ENCODE measurements at regions of chrX and their contacts with region 1.

Region 1: DNA sequence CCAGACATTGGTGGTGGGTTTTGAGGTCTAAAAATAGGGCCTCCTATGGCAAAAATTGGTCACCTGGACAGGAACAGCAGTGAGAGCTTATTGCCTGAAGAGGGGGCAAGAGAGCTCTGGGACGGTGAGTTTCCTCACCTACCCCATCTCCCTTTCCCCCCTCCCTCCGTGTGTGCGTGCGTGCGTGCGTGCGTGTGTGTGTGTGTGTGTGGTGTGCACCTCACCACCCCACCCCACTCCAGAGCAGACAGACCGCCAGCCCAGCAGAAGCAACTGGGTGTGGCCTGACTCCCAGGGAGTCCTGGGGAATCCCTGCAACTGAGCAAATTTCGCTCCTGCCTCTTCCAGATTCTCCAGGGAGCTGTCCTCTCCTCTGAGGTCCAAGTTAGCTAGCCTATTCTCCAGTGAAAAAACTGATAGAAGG is 44.7 kb downstream of the PRPS1 start:
- DNase-seq: peak; percentile 66
- H3K4me3 ChIP-seq: no peak overlapping the region
- H3K27ac ChIP-seq: peak overlapping the region; percentile 98
- H3K4me1 ChIP-seq: peaks cover 25% of the 10 kb centered on the region
- H3K27me3 ChIP-seq: peaks cover 3% of the 10 kb centered on the region
- CTCF ChIP-seq: peak; percentile 65 to 76

Region 2: DNA sequence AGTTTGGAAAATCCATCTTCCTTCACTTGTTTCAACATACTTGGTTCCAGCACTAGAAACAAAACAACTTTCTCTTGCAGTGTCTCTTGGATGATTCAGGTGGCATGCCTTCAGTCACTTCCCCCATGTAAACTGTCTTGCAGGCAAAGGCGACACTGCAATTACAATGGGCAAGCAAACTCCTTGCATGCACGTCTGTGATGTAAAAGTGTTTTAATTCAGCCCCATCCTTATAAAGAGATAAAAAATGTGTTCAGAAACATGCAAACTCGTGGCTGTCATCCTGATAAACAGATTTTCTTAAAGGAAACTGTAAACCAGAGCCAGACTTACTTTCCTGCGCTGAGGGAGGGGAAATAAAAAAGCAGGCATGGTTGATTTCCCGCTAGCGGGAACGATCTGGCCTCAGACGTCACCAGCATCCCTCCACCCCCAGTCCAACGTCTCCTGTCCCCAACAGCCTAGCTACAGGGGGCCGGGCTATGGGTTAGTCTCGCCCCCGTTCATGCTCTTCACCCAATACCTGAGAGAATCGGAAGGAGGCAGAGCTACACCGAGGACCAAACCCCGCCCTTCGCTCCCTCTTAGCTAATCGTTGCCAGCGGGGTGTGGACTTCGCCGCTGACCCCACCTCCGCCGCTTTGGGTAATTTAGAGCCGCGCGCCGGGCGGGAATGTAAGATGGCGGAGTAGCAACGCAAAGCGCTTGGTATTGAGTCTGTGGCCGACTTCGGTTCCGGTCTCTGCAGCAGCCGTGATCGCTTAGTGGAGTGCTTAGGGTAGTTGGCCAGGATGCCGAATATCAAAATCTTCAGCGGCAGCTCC is 44.9 kb before region 1 on chrX and contains the start of gene PRPS1:
- CTCF ChIA-PET with region 1: no interaction called
- dilution Hi-C with region 1: no loop called
- in situ Hi-C with region 1: no loop called
- intact Hi-C with region 1: no loop called
- DNase-seq: peak; percentile 90
- H3K4me3 ChIP-seq: peak within 1 kb of the TSS; percentile 48 to 66 (median 66)
- H3K27ac ChIP-seq: peak within 1 kb of the TSS; percentile 56
- H3K4me1 ChIP-seq: no peaks in the 10 kb centered on the region
- H3K27me3 ChIP-seq: peaks cover 2% of the 10 kb centered on the region
- CTCF ChIP-seq: no peak
- total RNA-seq, gene PRPS1: 23.2 to 34.1 TPM

Region 3: GRCh38 chrX:107710617-107711391 is 37.8 kb after region 1 on chrX:
- CTCF ChIA-PET with region 1: interaction called, 12 read pairs
- dilution Hi-C with region 1: loop called (anchors 5 kb)
- in situ Hi-C with region 1: loop called in 1 of 2 experiments (anchors 5 kb)
- intact Hi-C with region 1: loop called (anchors 1 kb)
- DNase-seq: peak; percentile 88
- H3K4me3 ChIP-seq: no peak overlapping the region
- H3K27ac ChIP-seq: peak overlapping the region; percentile 86
- H3K4me1 ChIP-seq: peaks cover 10% of the 10 kb centered on the region
- H3K27me3 ChIP-seq: no peaks in the 10 kb centered on the region
- CTCF ChIP-seq: no peak

Region 4: GRCh38 chrX:107716816-107717700 is 44.1 kb after region 1 on chrX:
- CTCF ChIA-PET with region 1: interaction called, 12 read pairs
- dilution Hi-C with region 1: loop called (anchors 5 kb)
- in situ Hi-C with region 1: loop called in 1 of 2 experiments (anchors 5 kb)
- intact Hi-C with region 1: loop called (anchors 1 kb)
- DNase-seq: peak; percentile 77
- H3K4me3 ChIP-seq: peak overlapping the region; percentile 47 to 68 (median 65)
- H3K27ac ChIP-seq: peak overlapping the region; percentile 85
- H3K4me1 ChIP-seq: peaks cover 13% of the 10 kb centered on the region
- H3K27me3 ChIP-seq: no peaks in the 10 kb centered on the region
- CTCF ChIP-seq: no peak

Region 5: GRCh38 chrX:107747596-107748161 is 74.7 kb after region 1 on chrX:
- CTCF ChIA-PET with region 1: no interaction called
- dilution Hi-C with region 1: no loop called
- in situ Hi-C with region 1: no loop called
- intact Hi-C with region 1: loop called (anchors 2 kb)
- DNase-seq: peak; percentile 73
- H3K4me3 ChIP-seq: no peak overlapping the region
- H3K27ac ChIP-seq: peak overlapping the region; percentile 70
- H3K4me1 ChIP-seq: peaks cover 23% of the 10 kb centered on the region
- H3K27me3 ChIP-seq: no peaks in the 10 kb centered on the region
- CTCF ChIP-seq: no peak

Region 6: DNA sequence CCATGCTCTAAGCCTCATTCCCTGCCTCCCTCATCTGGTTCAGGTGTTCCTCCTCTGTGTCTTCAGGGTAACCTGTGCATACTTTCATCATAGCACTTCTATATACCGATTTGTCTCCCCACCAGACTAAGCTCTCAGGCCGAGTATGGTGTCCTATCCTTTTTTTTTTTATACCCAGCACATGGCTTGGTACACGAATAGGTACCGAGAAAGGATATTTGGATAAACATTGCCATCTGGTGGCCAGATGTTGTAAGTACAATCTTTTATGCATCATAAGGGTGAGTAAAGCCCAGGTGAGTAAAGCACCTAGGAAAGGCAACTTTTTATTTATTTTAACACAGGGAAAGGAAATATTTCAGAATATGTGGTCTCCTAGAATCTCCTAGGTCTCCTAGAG is 221.1 kb after region 1 on chrX:
- CTCF ChIA-PET with region 1: no interaction called
- dilution Hi-C with region 1: no loop called
- in situ Hi-C with region 1: no loop called
- intact Hi-C with region 1: loop called (anchors 2 kb)
- DNase-seq: peak; percentile 57
- H3K4me3 ChIP-seq: no peak overlapping the region
- H3K27ac ChIP-seq: no peak overlapping the region
- H3K4me1 ChIP-seq: no peaks in the 10 kb centered on the region
- H3K27me3 ChIP-seq: no peaks in the 10 kb centered on the region
- CTCF ChIP-seq: peak; percentile 46 to 53